MCF 10A (cell line): ENCODE measurements at regions of chr7 and their contacts with region 1.

Region 1: DNA sequence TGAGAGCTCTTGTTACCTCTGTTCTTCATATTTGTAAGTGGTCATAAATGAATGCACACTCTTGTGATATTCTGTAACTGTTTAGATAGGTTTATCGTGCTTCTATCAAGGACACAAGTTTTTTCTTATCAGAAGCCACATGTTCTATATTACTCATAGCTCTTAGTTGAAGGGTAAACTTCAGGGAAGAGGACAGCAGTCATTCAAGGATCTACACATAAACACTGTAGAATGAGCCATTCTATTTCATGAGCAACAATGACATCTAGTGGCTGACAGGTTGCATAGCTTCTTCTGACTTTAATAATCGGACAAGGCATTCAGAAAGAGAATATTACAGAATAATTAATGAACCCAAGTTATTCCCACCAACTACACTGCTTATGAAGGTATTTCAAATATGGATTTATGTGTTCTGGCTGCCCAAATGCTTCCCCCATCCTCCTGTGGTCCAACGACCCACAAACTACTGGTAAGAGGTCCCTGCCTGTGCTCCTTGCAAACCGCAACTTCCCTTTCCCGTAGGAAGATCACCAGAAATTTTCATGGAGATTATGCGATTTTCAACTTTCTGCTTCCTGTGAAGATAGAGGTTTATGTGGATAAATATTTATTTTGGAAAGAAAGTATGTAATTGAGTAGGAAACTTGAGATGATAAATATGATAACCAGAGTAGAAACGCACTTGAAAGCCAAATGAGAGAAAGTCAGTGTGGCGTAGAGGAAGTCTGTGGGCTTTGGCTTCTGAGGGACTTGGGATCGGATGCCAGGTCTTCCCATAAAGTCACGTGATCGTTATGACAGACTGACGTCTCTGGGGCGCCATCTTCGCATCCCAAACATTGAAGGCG is 16.8 kb upstream of the ABCB5 start:
- DNase-seq: peak; percentile 72
- H3K4me3 Mint-ChIP-seq: no peak overlapping the region
- H3K27ac Mint-ChIP-seq: no peak overlapping the region
- H3K4me1 Mint-ChIP-seq: peaks cover 15% of the 10 kb centered on the region
- H3K27me3 Mint-ChIP-seq: no peaks in the 10 kb centered on the region
- CTCF ChIP-seq: peak; percentile 83

Region 2: DNA sequence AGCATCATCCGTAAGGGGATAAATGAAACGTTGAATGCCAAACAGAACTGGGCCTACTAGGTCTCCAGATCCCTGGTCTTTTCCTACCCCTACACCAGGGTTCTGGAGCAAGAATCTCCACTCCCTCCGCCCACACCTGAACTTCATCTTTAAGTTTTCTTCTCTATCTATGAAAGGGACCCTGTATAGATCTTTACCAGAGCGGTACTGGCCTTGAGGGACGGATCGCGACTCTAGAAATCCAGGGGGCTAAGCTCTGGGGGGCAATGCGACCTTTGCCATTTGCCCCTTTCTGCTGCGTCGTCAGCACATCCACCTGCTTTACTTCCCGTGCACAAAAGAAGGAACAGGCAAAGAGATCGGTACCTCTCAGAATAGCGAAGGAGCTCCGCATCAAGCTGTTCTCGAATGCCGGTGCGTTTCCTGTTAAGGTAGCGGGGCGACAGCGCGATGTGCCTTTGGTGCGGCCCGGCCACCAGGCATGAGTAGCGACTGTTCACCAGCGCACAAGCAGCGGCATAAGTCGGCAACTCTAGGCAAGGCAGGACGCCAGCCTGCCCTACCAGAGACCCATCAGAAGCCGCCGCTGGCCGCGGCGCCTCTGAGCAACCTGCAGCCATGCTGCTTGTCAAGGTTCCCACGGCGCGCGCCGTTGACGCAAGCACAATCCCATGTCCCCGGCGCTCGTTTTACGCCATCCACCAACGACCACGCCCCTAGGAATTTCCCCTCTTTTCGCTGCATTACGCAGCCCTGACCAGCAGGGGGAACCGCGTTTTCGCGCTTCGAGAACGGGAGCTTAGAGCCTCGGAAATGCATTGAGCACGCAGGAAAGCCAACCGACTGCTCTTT is 890.1 kb before region 1 on chr7 and contains the start of gene POLR1F:
- CTCF ChIA-PET with region 1: interaction called, 121 read pairs
- POLR2A ChIA-PET with region 1: interaction called, 9 read pairs
- intact Hi-C with region 1: loop called (anchors 1 kb)
- DNase-seq: peak; percentile 96
- H3K4me3 Mint-ChIP-seq: peak within 1 kb of the TSS; percentile 97
- H3K27ac Mint-ChIP-seq: peak within 1 kb of the TSS; percentile 94
- H3K4me1 Mint-ChIP-seq: peaks cover 38% of the 10 kb centered on the region
- H3K27me3 Mint-ChIP-seq: no peaks in the 10 kb centered on the region
- CTCF ChIP-seq: peak; percentile 85
- total RNA-seq, gene POLR1F: 21.4 and 22.8 TPM in 2 replicates

Region 3: DNA sequence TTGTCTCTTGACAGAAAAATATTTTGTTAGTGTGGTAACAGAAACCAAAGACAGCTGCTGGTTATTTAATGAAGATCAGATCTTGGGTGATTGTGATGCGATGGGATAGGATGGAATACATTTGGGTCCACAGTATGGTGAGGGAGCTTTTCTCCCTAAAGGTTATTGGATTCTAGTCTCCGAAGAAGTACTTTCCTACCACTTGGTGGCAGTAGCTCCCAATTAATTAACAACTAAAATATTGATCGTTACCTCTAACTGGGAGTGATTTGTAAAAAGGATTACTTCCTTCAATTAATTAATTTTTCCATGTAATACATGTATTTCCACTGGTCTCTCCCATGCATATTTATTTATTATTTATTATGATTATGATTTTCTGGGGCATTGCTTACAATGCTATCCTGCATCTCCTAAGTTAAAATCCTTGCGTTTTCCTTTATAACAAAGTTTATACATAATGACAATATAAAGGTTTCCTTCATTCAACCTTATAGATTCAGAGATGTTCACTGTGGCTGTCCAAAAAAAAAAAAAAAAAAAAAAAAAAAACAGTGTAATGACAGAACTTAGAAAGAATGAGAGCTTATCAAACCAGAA is 850.8 kb before region 1 on chr7:
- CTCF ChIA-PET with region 1: interaction called, 85 read pairs
- POLR2A ChIA-PET with region 1: interaction called, 8 read pairs
- intact Hi-C with region 1: loop called (anchors 1 kb)
- DNase-seq: peak; percentile 59
- H3K4me3 Mint-ChIP-seq: no peak overlapping the region
- H3K27ac Mint-ChIP-seq: no peak overlapping the region
- H3K4me1 Mint-ChIP-seq: peaks cover 9% of the 10 kb centered on the region
- H3K27me3 Mint-ChIP-seq: no peaks in the 10 kb centered on the region
- CTCF ChIP-seq: peak; percentile 66

Region 4: DNA sequence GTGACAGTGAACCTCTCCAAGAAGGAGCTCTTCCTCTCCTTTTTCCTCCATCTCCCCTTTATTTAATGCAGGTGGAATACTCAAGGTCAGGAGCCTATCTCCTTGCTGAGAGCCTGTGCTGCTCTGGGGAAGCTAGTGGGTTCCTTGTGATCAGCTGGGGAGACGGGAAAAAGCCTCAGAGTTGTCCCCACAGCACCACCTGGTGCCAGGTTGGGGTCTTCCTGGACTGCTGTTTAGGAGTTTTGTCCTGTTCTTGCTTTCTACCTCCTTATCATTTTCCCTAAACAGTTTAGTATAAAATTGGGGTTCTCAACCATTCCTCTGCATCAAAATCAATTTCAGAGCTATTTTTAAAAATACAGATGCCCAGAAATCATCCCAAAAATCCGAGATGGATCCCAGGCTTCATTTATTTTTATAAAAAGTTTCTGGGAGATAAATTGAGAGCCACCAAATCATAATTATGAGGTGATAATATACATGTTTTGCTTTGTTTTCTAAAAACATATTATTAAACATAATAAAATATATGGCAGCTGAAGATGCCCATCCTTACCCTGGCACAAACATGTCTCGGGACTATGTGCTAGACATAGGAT is 425.8 kb before region 1 on chr7:
- CTCF ChIA-PET with region 1: interaction called, 15 read pairs
- POLR2A ChIA-PET with region 1: no interaction called
- intact Hi-C with region 1: loop called (anchors 5 kb)
- DNase-seq: peak; percentile 71
- H3K4me3 Mint-ChIP-seq: no peak overlapping the region
- H3K27ac Mint-ChIP-seq: no peak overlapping the region
- H3K4me1 Mint-ChIP-seq: no peaks in the 10 kb centered on the region
- H3K27me3 Mint-ChIP-seq: no peaks in the 10 kb centered on the region
- CTCF ChIP-seq: peak; percentile 60

Region 5: DNA sequence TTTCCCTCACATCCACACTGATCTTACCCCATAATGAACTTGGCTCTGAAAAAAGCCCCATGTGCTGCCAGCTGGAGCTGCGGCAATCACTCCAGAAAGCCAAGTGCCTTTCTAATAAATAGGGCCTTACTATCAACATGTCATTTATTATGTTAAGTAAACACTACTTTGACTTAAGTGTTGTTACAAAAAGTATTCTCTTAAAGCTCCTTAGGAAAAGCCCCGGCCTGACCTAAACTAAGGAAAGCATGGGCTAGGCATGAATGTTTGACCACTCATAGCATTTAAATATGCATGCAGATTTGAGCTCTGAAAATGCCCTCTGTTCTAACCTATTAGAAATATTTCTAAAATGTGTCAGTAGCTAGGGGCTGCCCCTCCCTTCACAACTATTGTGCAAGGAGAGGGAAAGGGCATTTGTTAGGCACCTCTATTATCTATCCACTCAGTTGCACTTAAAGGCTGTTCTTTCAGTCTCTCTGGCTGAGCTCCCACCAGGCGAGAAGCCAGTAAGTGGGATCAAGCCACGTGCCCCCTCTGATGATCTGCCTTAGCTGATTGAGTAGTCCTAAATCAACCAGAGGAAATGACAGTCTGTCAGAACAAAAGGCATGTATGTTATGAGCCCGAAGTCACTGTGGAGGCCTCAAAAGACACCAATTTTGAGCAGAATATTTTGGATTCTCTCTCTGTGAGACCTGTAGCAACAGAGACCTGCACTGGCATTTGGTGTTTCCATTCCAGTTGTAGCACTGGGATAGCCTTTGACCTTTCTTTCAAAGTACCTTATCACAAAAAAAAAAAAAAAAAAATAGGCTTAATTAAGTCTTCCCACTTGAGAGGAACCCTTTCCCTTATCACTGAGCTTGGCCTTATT is 190.9 kb before region 1 on chr7:
- CTCF ChIA-PET with region 1: interaction called, 30 read pairs
- POLR2A ChIA-PET with region 1: interaction called, 4 read pairs
- intact Hi-C with region 1: loop called (anchors 5 kb)
- DNase-seq: peak; percentile 84
- H3K4me3 Mint-ChIP-seq: peak overlapping the region; percentile 19
- H3K27ac Mint-ChIP-seq: peak overlapping the region; percentile 90
- H3K4me1 Mint-ChIP-seq: peaks cover 23% of the 10 kb centered on the region
- H3K27me3 Mint-ChIP-seq: no peaks in the 10 kb centered on the region
- CTCF ChIP-seq: no peak

Region 6: GRCh38 chr7:20624666-20625385 is 26.1 kb after region 1 on chr7:
- CTCF ChIA-PET with region 1: no interaction called
- POLR2A ChIA-PET with region 1: no interaction called
- intact Hi-C with region 1: no loop called
- DNase-seq: no peak
- H3K4me3 Mint-ChIP-seq: no peak overlapping the region
- H3K27ac Mint-ChIP-seq: no peak overlapping the region
- H3K4me1 Mint-ChIP-seq: no peaks in the 10 kb centered on the region
- H3K27me3 Mint-ChIP-seq: no peaks in the 10 kb centered on the region
- CTCF ChIP-seq: no peak

Region 7: DNA sequence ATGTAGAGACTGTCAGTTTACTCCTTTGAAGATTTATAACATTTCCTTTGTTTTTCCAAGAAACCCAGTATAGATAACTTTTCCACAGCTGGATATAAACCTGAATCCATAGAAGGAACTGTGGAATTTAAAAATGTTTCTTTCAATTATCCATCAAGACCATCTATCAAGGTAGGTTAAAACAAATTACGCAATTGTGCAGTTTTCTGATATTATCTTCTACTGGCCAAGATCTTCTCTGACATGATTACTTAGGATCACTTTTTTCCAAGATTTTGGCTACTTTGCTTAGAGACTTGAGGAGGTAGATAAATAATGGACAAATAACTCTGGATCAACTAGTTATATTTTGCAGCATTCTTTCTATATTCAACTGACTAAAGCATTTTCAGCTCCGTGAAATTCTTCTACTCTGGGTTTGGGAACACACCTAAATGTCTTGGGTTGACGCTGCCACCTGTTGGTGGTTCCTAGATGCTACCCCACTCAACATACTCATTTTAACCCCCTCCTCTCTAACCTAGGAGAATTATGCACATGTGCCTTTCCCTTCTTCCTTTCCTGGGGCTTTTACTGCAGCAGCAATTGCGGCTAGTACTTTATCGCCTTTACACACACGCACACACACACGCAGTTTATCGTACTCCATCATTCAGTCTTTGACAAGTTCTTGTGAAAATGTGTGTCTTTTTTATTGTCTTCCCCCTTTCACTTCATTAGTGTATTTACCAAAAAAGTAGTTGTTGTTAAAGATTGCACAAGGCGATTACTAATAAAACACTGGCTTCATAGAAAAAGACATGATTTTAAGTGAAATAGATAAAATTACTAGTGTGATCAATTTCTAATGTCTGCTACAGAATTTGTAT is 49.5 kb after region 1 on chr7:
- CTCF ChIA-PET with region 1: interaction called, 17 read pairs
- POLR2A ChIA-PET with region 1: no interaction called
- intact Hi-C with region 1: no loop called
- DNase-seq: peak; percentile 64
- H3K4me3 Mint-ChIP-seq: no peak overlapping the region
- H3K27ac Mint-ChIP-seq: no peak overlapping the region
- H3K4me1 Mint-ChIP-seq: peaks cover 5% of the 10 kb centered on the region
- H3K27me3 Mint-ChIP-seq: no peaks in the 10 kb centered on the region
- CTCF ChIP-seq: peak; percentile 51

Region 8: GRCh38 chr7:20665096-20665495 is 66.4 kb after region 1 on chr7:
- CTCF ChIA-PET with region 1: no interaction called
- POLR2A ChIA-PET with region 1: no interaction called
- intact Hi-C with region 1: no loop called
- DNase-seq: no peak
- H3K4me3 Mint-ChIP-seq: no peak overlapping the region
- H3K27ac Mint-ChIP-seq: no peak overlapping the region
- H3K4me1 Mint-ChIP-seq: no peaks in the 10 kb centered on the region
- H3K27me3 Mint-ChIP-seq: no peaks in the 10 kb centered on the region
- CTCF ChIP-seq: no peak